Sigmoid colon (tissue), 7 donors: ENCODE measurements at regions of chr16 and their contacts with region 1.

Region 1: DNA sequence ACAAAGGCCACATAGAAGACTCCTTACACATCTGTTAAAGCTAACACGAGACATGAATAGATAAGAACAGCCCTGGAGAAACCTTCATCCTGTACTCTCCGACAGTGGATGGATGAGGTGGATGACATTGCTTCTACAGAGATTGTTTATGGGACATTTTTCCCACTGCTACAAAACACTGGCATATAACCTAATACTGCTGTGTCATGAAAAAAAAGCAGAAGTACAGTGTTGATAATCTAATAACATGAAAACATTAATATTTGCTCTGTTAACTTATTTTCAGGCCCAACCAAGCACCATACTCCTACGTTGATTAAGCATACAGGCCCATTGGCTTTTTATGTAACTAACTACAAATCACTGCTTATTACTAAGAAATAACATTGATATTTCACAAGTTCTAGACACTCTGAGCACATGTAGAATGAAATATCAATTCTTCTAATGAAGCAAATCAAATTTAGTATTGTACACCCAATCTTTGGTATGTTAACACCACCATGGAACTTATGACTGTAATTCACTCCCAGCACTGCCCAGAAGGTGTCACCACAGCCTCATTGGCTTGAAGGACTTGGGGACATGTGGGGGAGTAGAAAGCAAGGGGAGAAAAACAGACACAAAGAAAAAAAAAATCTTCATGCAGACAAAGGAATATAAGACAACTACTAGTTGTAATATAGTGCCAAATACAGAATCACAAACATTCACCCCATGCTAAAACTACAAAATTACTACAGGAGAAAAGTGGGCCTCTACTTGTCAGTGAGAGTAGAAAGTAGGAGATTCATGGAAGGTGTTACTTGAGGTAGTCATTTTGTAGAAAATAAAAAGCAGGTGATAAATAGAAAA is 330.0 kb upstream of the PMFBP1 start:
- DNase-seq: no peak
- H3K4me3 ChIP-seq: no peak overlapping the region
- H3K27ac ChIP-seq: no peak overlapping the region
- H3K4me1 ChIP-seq: no peaks in the 10 kb centered on the region
- H3K27me3 ChIP-seq: no peaks in the 10 kb centered on the region
- CTCF ChIP-seq: peak; percentile 14 to 71 (median 45)
- EP300 ChIP-seq: no peak
- POLR2A ChIP-seq: no peak

Region 2: DNA sequence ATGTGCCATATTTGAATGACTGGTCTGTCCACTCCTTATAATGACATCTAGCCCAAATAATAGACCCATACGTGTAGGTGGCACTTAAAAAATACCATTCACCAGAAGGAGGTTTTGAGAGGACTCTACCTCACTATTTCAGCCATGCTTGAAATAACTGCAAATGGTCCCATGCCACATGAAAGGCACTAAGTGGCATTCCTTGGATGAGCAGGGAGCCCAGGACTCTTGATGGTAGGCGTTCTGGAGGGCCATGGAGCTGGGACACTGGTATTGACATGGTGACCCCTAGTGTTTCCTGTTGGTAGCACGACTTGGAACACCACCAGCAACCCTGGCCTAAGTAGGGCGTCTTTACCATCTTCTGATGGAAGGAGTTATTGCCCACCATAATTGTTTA is 694.7 kb after region 1 on chr16:
- intact Hi-C with region 1: loop called (anchors 10 kb)
- DNase-seq: peak; percentile 84
- H3K4me3 ChIP-seq: no peak overlapping the region
- H3K27ac ChIP-seq: no peak overlapping the region
- H3K4me1 ChIP-seq: no peaks in the 10 kb centered on the region
- H3K27me3 ChIP-seq: no peaks in the 10 kb centered on the region
- CTCF ChIP-seq: peak; percentile 24 to 68 (median 55)
- EP300 ChIP-seq: no peak
- POLR2A ChIP-seq: no peak